ENCODE measurements at regions of chr2 and their contacts with region 1.

Region 1: DNA sequence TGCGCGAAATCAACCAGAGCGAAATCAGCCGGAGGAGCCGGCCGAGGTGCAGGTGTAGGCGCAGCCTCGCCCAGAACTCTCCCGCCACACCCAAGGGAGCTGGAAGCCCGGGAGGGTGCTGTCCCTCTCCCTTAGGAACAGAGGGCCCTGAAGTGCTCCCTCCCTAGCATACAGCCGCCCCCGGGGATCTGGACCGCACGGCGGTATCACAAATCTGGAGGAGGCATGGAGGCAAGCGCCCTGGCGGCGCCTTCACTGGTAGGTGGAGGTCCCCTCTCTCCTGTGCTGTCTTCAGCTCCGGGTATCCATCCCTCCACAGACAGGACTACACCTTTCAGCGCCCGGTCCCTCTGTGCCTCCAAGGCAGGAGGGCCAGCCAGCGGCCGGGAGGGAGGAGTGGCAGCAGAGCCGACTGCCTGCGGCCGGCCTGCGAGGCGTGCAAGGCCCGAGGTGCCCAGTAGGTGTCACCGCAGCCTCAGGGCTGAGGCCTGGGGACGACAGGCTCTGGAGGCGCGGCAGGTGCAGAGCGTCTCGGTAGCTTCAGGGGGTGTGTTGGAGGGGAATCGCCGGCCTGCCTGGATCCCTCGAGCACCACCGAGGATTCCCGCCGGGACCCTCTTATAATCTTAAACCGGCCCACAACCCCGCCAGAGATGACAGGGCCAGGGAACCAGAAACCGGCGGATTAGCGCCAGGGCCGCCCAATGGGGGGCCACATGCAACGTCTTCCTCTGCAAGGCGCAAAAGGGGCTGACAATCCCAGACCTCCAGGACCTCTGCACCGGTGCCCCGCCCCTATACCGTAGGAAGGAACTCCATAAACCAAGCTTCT is 2.8 kb downstream of the IHH start:
- DNase-seq: no peak
- ATAC-seq: peak; percentile 99
- H3K4me3 ChIP-seq: no peak overlapping the region
- H3K27ac ChIP-seq: no peak overlapping the region
- H3K4me1 ChIP-seq: no peaks in the 10 kb centered on the region
- H3K27me3 ChIP-seq: peaks cover 23 to 26% of the 10 kb centered on the region in 2 experiments
- CTCF ChIP-seq: peak; percentile 80 to 93 (median 82)
- EP300 ChIP-seq: no peak
- POLR2A ChIP-seq: no peak
- RAD21 ChIP-seq: peak; percentile 84

Region 2: GRCh38 chr2:218964041-218964770 is 93.7 kb before region 1 on chr2:
- CTCF ChIA-PET with region 1: no interaction called
- POLR2A ChIA-PET with region 1: no interaction called
- RAD21 ChIA-PET with region 1: no interaction called
- SMC1A ChIA-PET with region 1: no interaction called
- in situ Hi-C with region 1: no loop called
- intact Hi-C with region 1: no loop called
- DNase-seq: no peak
- ATAC-seq: no peak
- H3K4me3 ChIP-seq: no peak overlapping the region
- H3K27ac ChIP-seq: no peak overlapping the region
- H3K4me1 ChIP-seq: no peaks in the 10 kb centered on the region
- H3K27me3 ChIP-seq: peaks cover 12 to 13% of the 10 kb centered on the region in 2 experiments; a peak in 3 of 4 replicates
- CTCF ChIP-seq: no peak
- EP300 ChIP-seq: no peak
- POLR2A ChIP-seq: no peak
- RAD21 ChIP-seq: no peak

Region 3: GRCh38 chr2:219149667-219150066 is 91.7 kb after region 1 on chr2:
- CTCF ChIA-PET with region 1: interaction called, 51 read pairs
- POLR2A ChIA-PET with region 1: no interaction called
- RAD21 ChIA-PET with region 1: interaction called, 21 read pairs
- SMC1A ChIA-PET with region 1: interaction called, 13 read pairs
- in situ Hi-C with region 1: loop called (anchors 5 kb)
- intact Hi-C with region 1: no loop called
- DNase-seq: no peak
- ATAC-seq: no peak
- H3K4me3 ChIP-seq: no peak overlapping the region
- H3K27ac ChIP-seq: no peak overlapping the region
- H3K4me1 ChIP-seq: no peaks in the 10 kb centered on the region
- H3K27me3 ChIP-seq: no peaks in the 10 kb centered on the region
- CTCF ChIP-seq: no peak
- EP300 ChIP-seq: no peak
- POLR2A ChIP-seq: no peak
- RAD21 ChIP-seq: no peak

Measured in GM12878 (cell line).